Aorta (tissue), 5 donors: ENCODE measurements at regions of chr17 and their contacts with region 1.

Region 1: DNA sequence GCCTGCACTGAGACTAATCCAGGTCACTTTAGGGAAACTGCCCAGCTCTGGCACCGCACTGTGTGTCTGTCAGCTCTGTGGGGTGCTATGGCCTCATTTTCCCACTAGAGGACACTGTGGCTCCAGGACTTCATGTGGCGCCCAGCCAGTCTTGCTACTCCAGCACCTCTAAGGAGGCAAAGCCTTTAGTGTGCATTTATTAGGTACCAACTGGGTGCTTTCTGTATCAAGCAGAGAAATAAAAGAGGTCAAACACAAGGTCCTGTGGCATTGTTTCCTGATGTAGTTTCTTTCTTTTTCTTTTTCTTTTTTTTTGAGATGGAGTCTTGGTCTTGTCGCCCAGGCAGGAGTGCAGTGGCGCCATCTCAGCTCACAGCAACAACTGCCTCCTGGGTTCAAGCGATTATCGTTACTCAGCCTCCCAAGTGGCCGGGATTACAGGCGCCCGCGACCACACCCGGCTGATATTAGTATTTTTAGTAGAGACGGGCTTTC is 12.5 kb upstream of the RHBDL3 start:
- DNase-seq: peak; percentile 84 to 90
- ATAC-seq: peak; percentile 91
- H3K4me3 ChIP-seq: no peak overlapping the region
- H3K27ac ChIP-seq: no peak overlapping the region
- H3K4me1 ChIP-seq: no peaks in the 10 kb centered on the region
- H3K27me3 ChIP-seq: no peaks in the 10 kb centered on the region

Region 2: DNA sequence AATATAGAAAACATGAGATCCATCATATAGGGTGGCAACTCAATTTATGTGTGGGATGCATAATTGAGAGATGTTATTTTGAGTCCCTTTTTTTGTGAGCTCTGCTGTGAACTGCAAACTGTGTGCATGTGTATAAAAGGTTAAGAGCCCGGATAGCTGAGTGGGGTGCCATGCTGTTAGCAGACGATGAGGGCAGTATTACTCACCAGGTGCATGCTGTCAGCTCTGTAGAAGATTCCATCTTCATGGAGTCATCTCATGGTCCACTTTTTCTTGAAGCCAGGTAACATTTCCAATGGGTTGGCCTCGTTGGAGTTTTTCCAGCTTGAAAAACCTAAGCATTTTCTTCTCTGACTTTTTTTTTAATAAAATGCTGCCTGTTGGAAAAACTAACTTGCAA is 30.5 kb before region 1 on chr17:
- intact Hi-C with region 1: no loop called
- DNase-seq: no peak
- ATAC-seq: no peak
- H3K4me3 ChIP-seq: no peak overlapping the region
- H3K27ac ChIP-seq: no peak overlapping the region
- H3K4me1 ChIP-seq: no peaks in the 10 kb centered on the region
- H3K27me3 ChIP-seq: no peaks in the 10 kb centered on the region

Region 3: GRCh38 chr17:32319548-32319905 is 66.4 kb after region 1 on chr17:
- intact Hi-C with region 1: loop called (anchors 1 to 2 kb)
- DNase-seq: peak; percentile 80 to 90
- ATAC-seq: peak; percentile 87
- H3K4me3 ChIP-seq: no peak overlapping the region
- H3K27ac ChIP-seq: no peak overlapping the region
- H3K4me1 ChIP-seq: no peaks in the 10 kb centered on the region
- H3K27me3 ChIP-seq: no peaks in the 10 kb centered on the region